ENCODE measurements at regions of chr17 and their contacts with region 1.

Region 1: DNA sequence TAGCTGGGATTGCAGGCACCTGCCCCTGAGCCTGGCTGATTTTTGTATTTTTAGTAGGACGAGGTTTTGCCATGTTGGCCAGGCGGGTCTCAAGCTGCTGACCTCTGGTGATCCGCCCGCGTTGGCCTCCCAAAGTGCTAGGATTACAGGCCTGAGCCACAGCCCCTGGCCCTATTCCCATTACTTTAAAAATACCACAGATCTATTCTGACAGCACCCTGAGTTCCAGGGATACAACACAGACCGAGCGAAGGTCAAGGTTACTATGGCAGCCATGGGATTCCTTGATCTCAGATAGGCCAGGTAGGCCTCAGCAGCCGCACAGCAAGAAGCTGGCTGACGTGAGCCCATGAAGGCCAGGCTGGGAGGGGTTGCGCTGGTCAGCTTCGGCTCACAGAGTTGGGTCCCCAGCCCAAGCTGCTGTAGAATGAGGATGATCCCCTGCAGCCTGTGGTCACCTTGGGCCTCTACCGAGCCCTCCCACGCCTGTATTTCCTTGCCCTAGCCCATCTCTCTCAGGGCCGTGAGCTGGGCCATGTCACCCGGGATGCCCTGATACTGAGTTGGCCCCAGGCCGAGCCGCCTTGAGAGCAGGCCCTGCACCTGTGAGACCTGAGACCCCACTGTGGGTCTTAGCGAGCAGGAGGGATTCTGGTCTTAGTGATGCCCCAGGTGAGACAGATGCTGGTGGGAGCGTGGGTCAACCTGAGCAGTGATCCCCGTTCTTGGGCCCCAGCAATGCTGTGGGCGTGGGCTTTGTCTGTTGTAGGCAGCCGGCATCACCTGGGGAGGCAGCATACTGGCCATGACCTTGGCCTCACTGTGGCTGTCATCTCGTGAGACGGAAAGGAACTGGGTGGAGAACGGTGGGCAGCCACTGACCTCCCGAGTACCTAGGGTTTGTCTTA is 16.9 kb upstream of the RNF213 start:
- DNase-seq: no peak
- H3K4me3 ChIP-seq: no peak overlapping the region
- H3K27ac ChIP-seq: no peak overlapping the region
- H3K27me3 ChIP-seq: no peaks in the 10 kb centered on the region
- CTCF ChIP-seq: no peak

Region 2: DNA sequence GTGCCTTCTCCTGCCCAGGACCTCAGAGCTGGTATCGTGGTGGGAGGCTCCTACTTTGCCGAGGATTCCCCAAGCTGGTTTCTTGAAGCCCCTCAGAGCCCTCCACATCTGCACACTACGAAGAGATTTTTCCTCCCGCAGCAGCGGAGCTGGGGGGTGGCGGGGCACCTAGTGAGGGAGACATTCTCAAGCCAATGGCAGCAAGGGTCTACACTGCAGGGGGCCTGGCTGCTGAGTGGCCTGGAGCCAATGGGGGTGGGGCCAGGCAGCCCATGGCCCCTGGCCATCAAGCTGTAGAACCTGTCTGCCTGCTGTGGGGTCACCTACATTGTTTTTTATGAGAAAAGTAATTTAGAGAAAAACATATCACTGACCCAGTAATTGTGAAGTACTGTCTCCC is 18.6 kb before region 1 on chr17:
- CTCF ChIA-PET with region 1: no interaction called
- POLR2A ChIA-PET with region 1: interaction called, 11 read pairs
- DNase-seq: no peak
- H3K4me3 ChIP-seq: no peak overlapping the region
- H3K27ac ChIP-seq: no peak overlapping the region
- H3K27me3 ChIP-seq: no peaks in the 10 kb centered on the region
- CTCF ChIP-seq: no peak